Panc1 (cell line): ENCODE measurements at regions of chr17 and their contacts with region 1.

Region 1: GRCh38 chr17:72699545-72699944 is 392.9 kb downstream of the SLC39A11 start:
- DNase-seq: no peak
- ATAC-seq: peak; percentile 79
- H3K4me3 ChIP-seq: no peak overlapping the region
- H3K27ac ChIP-seq: peak overlapping the region; percentile 96
- H3K4me1 ChIP-seq: peaks cover 62% of the 10 kb centered on the region
- H3K27me3 ChIP-seq: no peaks in the 10 kb centered on the region
- CTCF ChIP-seq: no peak

Region 2: GRCh38 chr17:72683506-72684404 is 15.8 kb before region 1 on chr17:
- CTCF ChIA-PET with region 1: interaction called, 12 read pairs
- POLR2A ChIA-PET with region 1: interaction called, 12 read pairs
- in situ Hi-C with region 1: no loop called
- intact Hi-C with region 1: no loop called
- DNase-seq: peak; percentile 86
- ATAC-seq: peak; percentile 96
- H3K4me3 ChIP-seq: peak overlapping the region; percentile 5 to 20; a peak in 2 of 4 replicates
- H3K27ac ChIP-seq: peak overlapping the region; percentile 100
- H3K4me1 ChIP-seq: peaks cover 66% of the 10 kb centered on the region
- H3K27me3 ChIP-seq: no peaks in the 10 kb centered on the region
- CTCF ChIP-seq: no peak

Region 3: GRCh38 chr17:72715906-72716572 is 16.5 kb after region 1 on chr17:
- CTCF ChIA-PET with region 1: interaction called, 13 read pairs
- POLR2A ChIA-PET with region 1: interaction called, 8 read pairs
- in situ Hi-C with region 1: no loop called
- intact Hi-C with region 1: no loop called
- DNase-seq: peak; percentile 81
- ATAC-seq: peak; percentile 93
- H3K4me3 ChIP-seq: peak overlapping the region in 1 of 2 experiments; percentile 22; a peak in 1 of 4 replicates
- H3K27ac ChIP-seq: peak overlapping the region; percentile 88
- H3K4me1 ChIP-seq: peaks cover 54% of the 10 kb centered on the region
- H3K27me3 ChIP-seq: no peaks in the 10 kb centered on the region
- CTCF ChIP-seq: no peak

Region 4: GRCh38 chr17:73478768-73479424 is 779.4 kb after region 1 on chr17:
- CTCF ChIA-PET with region 1: no interaction called
- POLR2A ChIA-PET with region 1: interaction called, 15 read pairs
- in situ Hi-C with region 1: no loop called
- intact Hi-C with region 1: no loop called
- DNase-seq: no peak
- ATAC-seq: peak; percentile 40; the same call in 1 of the 2 replicates
- H3K4me3 ChIP-seq: no peak overlapping the region
- H3K27ac ChIP-seq: no peak overlapping the region
- H3K4me1 ChIP-seq: no peaks in the 10 kb centered on the region
- H3K27me3 ChIP-seq: no peaks in the 10 kb centered on the region; the same call in 1 of the 2 replicates
- CTCF ChIP-seq: no peak